ENCODE measurements at regions of chr10 and their contacts with region 1.

Region 1: DNA sequence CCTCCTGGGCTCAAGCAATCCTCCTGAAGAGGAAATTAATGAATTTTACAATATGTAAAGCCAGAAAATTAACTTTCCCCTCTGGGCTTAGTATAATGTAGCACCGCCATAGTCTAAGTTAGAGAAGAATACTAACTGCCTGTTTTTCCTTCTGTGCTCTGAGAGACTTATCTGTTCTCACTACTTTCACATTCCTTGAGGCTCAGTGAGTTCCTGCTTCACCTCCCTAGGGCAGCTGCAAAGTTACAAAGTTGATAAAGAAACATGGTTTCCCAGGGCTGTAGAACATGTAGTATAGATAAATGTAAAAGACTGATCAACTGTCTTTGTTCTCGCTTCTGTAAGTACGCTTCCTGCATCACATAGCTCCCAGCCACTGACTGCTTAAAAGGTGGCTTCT is 16.0 kb upstream of the OLAH start:
- DNase-seq: no peak
- H3K4me3 ChIP-seq: no peak overlapping the region
- CTCF ChIP-seq: no peak

Region 2: GRCh38 chr10:14904316-14904732 is 123.4 kb before region 1 on chr10:
- in situ Hi-C with region 1: loop called (anchors 10 kb)
- DNase-seq: no peak
- H3K4me3 ChIP-seq: no peak overlapping the region
- CTCF ChIP-seq: peak; percentile 45

Region 3: DNA sequence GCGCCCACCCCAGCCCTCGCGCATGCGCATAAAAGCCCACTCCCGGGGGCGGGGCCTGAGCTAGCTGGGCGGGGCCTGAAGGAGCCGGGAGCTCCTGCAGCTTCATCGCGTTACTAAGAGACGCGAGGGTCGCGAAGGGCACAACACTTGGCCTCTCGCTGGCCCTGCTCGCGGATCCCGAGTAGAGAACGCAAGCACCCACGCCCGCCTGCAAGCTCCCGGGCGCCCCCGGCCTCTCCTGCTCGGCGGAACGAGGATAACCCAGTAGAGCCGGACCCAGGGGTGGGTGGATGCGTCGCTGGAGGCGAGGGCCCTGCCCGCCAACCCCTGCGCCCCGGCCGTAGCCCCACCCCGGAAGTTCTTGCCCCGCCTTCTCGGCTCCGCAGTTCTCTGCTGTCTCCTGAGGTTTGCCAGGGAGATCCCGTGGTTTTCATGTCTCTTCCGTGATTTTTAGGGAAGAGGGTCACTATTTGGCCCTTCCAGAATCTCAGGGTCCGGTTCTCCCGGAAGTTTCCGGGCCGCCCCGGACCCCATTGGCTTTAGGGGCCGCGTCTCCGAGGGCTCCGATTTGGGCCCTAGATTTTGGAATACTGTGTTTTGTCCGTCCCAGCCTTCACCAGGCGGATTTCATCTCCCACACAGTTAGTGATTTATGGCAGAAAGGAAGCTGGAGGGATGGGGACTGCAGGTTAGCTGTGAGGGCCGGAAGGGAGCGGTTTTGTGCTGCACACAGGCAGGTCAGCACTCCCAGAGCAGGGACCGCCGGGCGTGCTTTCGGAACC is 68.3 kb before region 1 on chr10 and contains the start of gene MEIG1:
- in situ Hi-C with region 1: no loop called
- DNase-seq: peak; percentile 77
- H3K4me3 ChIP-seq: peak within 1 kb of the TSS; percentile 72
- CTCF ChIP-seq: no peak

Region 4: GRCh38 chr10:14995964-14996565 is 31.7 kb before region 1 on chr10:
- in situ Hi-C with region 1: no loop called
- DNase-seq: no peak
- H3K4me3 ChIP-seq: peak overlapping the region; percentile 43
- CTCF ChIP-seq: no peak

Region 5: DNA sequence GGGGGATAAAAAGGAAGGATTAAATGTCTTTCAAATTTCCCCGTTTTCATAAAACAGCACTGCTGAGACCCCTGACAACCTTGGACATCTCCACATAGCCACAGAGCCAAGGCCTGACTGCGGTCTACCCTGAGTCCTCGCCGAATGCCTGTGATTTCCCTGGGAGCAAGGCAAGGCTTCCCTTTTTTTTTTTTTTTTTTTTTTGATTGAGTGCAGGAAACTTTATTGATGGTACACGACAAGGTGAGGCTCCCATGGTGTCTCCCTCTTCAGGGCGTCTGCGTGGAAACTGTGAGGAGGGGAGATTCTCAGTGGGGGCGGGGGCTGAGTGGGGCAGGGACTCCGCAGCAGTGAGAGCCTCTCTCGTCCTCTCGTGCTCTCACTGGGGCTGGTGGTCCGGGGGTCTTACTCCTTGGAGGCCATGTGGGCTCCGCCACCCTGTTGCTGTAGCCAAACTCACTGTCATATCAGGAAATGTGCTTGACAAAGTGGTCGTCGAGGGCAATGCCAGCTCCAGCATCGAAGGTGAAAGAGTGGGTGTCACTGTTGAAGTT is 65.2 kb after region 1 on chr10:
- in situ Hi-C with region 1: loop called (anchors 5 kb)
- DNase-seq: no peak
- H3K4me3 ChIP-seq: no peak overlapping the region
- CTCF ChIP-seq: no peak